ENCODE measurements at regions of chr16 and their contacts with region 1.

Region 1: GRCh38 chr16:70570967-70571570 is 47.5 kb downstream of the SF3B3 start:
- DNase-seq: no peak
- ATAC-seq: no peak
- H3K4me3 ChIP-seq: no peak overlapping the region
- H3K27ac ChIP-seq: no peak overlapping the region
- H3K4me1 ChIP-seq: no peaks in the 10 kb centered on the region
- H3K27me3 ChIP-seq: no peaks in the 10 kb centered on the region
- CTCF ChIP-seq: no peak

Region 2: GRCh38 chr16:70470927-70471341 is 100.1 kb before region 1 on chr16:
- CTCF ChIA-PET with region 1: no interaction called
- POLR2A ChIA-PET with region 1: no interaction called
- intact Hi-C with region 1: no loop called
- DNase-seq: peak; percentile 12
- ATAC-seq: peak; percentile 67
- H3K4me3 ChIP-seq: no peak overlapping the region
- H3K27ac ChIP-seq: no peak overlapping the region
- H3K4me1 ChIP-seq: peaks cover 9% of the 10 kb centered on the region; the same call in 1 of the 2 replicates
- H3K27me3 ChIP-seq: no peaks in the 10 kb centered on the region
- CTCF ChIP-seq: peak; percentile 50

Region 3: GRCh38 chr16:70529051-70529777 is 41.9 kb before region 1 on chr16:
- CTCF ChIA-PET with region 1: no interaction called
- POLR2A ChIA-PET with region 1: interaction called, 3 read pairs
- intact Hi-C with region 1: loop called (anchors 2 kb)
- DNase-seq: peak; percentile 66
- ATAC-seq: peak; percentile 37
- H3K4me3 ChIP-seq: no peak overlapping the region
- H3K27ac ChIP-seq: no peak overlapping the region
- H3K4me1 ChIP-seq: peaks cover 24% of the 10 kb centered on the region
- H3K27me3 ChIP-seq: no peaks in the 10 kb centered on the region
- CTCF ChIP-seq: peak; percentile 67